ENCODE measurements at regions of chr7 and their contacts with region 1.

Region 1: DNA sequence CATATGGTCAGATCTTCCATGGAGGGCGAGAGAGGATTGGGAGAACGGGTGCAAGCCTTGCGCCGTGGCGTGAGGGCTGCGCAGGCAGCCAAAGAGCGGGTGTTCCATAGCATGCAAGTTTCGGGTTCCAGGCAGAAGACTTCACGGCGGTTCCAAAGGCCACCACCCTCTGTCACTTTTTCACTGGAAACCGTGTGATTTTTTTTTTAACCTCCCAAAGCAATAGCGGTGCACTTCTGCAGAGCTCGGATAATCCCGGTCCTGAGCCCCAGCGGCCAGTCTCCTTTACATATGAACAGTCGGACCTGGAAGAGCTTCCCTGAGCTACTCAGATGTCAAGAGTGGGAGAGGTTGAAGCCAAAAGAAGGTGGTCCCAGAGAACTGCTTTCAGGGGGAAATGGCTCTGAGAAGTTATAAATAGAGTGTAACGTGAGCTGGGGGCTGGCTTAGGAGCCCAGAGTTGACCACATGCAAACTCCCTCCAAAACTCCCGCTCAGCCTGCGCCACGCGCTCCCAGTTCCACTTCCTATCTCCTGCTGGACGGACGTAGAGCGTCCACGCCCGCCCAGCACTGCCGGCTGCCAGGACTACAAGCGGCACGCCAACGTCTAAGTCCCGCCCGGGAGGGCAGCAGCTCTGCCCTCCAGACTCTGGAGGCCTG is at the start of gene MEOX2:
- DNase-seq: peak; percentile 87
- H3K4me3 ChIP-seq: peak within 1 kb of the TSS; percentile 61 to 95 (median 80)
- H3K27ac ChIP-seq: peak within 1 kb of the TSS; percentile 70
- H3K4me1 ChIP-seq: peaks cover 22% of the 10 kb centered on the region
- H3K27me3 ChIP-seq: no peaks in the 10 kb centered on the region
- CTCF ChIP-seq: no peak
- POLR2A ChIP-seq: peak; percentile 69
- total RNA-seq, gene MEOX2: 45.1 and 47.8 TPM in 2 replicates

Region 2: DNA sequence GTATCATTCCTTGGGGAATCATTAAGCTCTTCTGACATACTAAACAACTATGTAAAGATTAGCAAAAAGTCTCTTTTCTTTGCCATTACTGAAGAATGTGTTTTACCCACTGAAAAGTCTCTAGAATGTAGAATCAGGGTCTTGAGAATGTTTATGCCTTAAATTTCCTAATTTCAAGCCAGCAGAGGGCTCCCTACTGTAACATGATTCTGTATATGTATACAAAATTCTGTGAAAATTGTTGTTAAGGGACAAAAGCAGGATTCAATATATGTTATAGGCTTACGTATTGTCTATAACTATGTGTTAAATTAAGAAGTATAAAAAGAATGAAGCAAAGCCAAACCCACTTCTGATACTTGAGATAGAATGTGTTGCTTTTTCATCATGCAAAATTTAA is 486.9 kb before region 1 on chr7:
- CTCF ChIA-PET with region 1: no interaction called
- POLR2A ChIA-PET with region 1: no interaction called
- dilution Hi-C with region 1: no loop called
- intact Hi-C with region 1: loop called (anchors 1 kb)
- DNase-seq: peak; percentile 51
- H3K4me3 ChIP-seq: no peak overlapping the region
- H3K27ac ChIP-seq: no peak overlapping the region
- H3K4me1 ChIP-seq: no peaks in the 10 kb centered on the region
- H3K27me3 ChIP-seq: no peaks in the 10 kb centered on the region
- CTCF ChIP-seq: peak; percentile 15 to 16
- POLR2A ChIP-seq: no peak

Region 3: DNA sequence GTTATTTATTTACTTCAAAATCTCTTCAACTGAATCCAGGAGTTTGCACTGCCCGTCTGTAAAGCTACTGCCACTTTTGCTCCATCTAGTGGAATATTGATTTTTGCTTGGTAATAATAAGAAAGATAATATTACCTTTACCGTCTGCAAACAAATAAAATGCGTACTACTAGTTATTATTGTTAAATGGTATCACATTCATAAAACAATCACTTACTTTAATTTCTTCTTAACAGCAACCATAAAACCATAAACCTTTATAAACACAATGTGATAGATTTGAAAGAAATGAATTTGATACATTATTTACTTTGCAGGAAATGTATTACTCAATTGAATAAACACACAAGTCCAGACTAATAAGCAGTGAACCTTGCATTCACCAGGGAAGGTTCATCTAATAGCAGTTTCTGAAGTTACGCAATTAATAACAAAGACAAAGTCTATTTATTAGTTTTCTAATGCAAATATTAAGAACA is 131.0 kb before region 1 on chr7:
- CTCF ChIA-PET with region 1: interaction called, 5 read pairs
- POLR2A ChIA-PET with region 1: no interaction called
- dilution Hi-C with region 1: no loop called
- intact Hi-C with region 1: loop called (anchors 2 kb)
- DNase-seq: peak; percentile 73
- H3K4me3 ChIP-seq: peak overlapping the region in 2 of 3 experiments; percentile 12 to 32
- H3K27ac ChIP-seq: peak overlapping the region; percentile 27
- H3K4me1 ChIP-seq: peaks cover 36% of the 10 kb centered on the region
- H3K27me3 ChIP-seq: no peaks in the 10 kb centered on the region
- CTCF ChIP-seq: peak in 1 of 2 donors; percentile 6
- POLR2A ChIP-seq: no peak

Region 4: GRCh38 chr7:15764851-15765382 is 78.5 kb after region 1 on chr7:
- CTCF ChIA-PET with region 1: no interaction called
- POLR2A ChIA-PET with region 1: no interaction called
- dilution Hi-C with region 1: no loop called
- intact Hi-C with region 1: loop called (anchors 2 kb)
- DNase-seq: peak; percentile 72
- H3K4me3 ChIP-seq: no peak overlapping the region
- H3K27ac ChIP-seq: no peak overlapping the region
- H3K4me1 ChIP-seq: peaks cover 4% of the 10 kb centered on the region
- H3K27me3 ChIP-seq: no peaks in the 10 kb centered on the region
- CTCF ChIP-seq: no peak
- POLR2A ChIP-seq: no peak

Region 5: DNA sequence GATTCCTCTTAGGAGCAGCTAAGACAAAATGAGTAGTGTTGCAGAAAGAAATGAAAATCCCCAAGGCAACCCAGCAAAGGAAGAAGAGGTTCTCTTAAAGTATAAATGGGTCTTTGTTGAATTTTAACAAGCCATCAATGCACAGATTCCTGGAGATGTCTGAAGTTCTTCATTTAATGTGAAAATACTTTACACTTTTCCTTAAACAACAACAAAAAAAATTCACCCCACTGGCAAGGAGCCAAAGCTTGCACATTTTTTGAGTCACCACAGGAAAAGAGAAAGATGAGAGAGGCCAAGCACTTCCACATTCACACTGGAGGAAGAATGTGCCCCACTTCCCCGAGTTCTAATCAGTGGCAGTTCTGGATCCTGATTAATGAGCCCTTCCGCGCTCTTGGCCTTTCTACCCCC is 286.4 kb after region 1 on chr7:
- CTCF ChIA-PET with region 1: no interaction called
- POLR2A ChIA-PET with region 1: no interaction called
- dilution Hi-C with region 1: no loop called
- intact Hi-C with region 1: loop called (anchors 2 kb)
- DNase-seq: peak; percentile 87
- H3K4me3 ChIP-seq: no peak overlapping the region
- H3K27ac ChIP-seq: no peak overlapping the region
- H3K4me1 ChIP-seq: peaks cover 23% of the 10 kb centered on the region
- H3K27me3 ChIP-seq: no peaks in the 10 kb centered on the region
- CTCF ChIP-seq: no peak
- POLR2A ChIP-seq: no peak

Region 6: GRCh38 chr7:16564909-16565426 is 878.5 kb after region 1 on chr7:
- CTCF ChIA-PET with region 1: interaction called, 5 read pairs
- POLR2A ChIA-PET with region 1: no interaction called
- dilution Hi-C with region 1: no loop called
- intact Hi-C with region 1: loop called (anchors 10 kb)
- DNase-seq: peak; percentile 64
- H3K4me3 ChIP-seq: no peak overlapping the region
- H3K27ac ChIP-seq: no peak overlapping the region
- H3K4me1 ChIP-seq: peaks cover 6% of the 10 kb centered on the region
- H3K27me3 ChIP-seq: no peaks in the 10 kb centered on the region
- CTCF ChIP-seq: peak; percentile 42 to 61
- POLR2A ChIP-seq: no peak